ENCODE measurements at regions of chr2 and their contacts with region 1.

Region 1: GRCh38 chr2:97995734-97996624 is at the start of gene TMEM131:
- DNase-seq: peak; percentile 74
- ATAC-seq: peak; percentile 85
- H3K4me3 ChIP-seq: peak within 1 kb of the TSS; percentile 83
- H3K27ac ChIP-seq: peak within 1 kb of the TSS; percentile 94
- H3K4me1 ChIP-seq: peaks cover 9% of the 10 kb centered on the region
- H3K27me3 ChIP-seq: no peaks in the 10 kb centered on the region
- CTCF ChIP-seq: no peak
- EP300 ChIP-seq: peak in 1 of 2 experiments; percentile 5; a peak in 1 of 4 replicates
- POLR2A ChIP-seq: peak; percentile 88
- RAD21 ChIP-seq: no peak
- polyA plus RNA-seq, gene TMEM131: 6.0 to 8.1 TPM

Region 2: DNA sequence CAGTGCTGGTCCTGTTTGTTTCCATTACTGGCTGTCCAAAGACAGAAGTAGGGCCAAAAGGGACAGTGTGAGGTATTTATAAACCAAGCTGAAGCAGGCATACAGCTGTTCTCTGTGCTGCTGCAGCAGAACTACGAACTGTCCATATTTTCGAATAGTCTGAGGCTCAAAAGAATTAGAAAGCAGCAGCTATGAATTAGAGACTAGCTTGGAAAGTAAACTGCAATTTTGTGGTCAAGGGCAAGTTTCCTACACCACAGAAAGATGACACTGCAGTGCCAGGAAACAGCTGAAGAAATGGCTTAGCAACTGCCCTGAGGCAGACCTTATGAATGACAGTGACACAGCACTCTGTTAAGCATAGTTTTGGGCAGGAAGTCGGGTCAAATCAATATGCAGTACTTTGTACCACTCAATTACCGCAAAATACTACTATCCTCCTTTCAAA is 125.6 kb before region 1 on chr2:
- CTCF ChIA-PET with region 1: interaction called, 4 read pairs
- POLR2A ChIA-PET with region 1: interaction called, 9 read pairs
- RAD21 ChIA-PET with region 1: interaction called, 7 read pairs
- SMC1A ChIA-PET with region 1: interaction called, 12 read pairs
- in situ Hi-C with region 1: no loop called
- intact Hi-C with region 1: no loop called
- DNase-seq: peak; percentile 87
- ATAC-seq: peak; percentile 100
- H3K4me3 ChIP-seq: no peak overlapping the region
- H3K27ac ChIP-seq: peak overlapping the region; percentile 33; the same call in 1 of the 2 replicates
- H3K4me1 ChIP-seq: peaks cover 20% of the 10 kb centered on the region
- H3K27me3 ChIP-seq: no peaks in the 10 kb centered on the region
- CTCF ChIP-seq: peak in 2 of 3 experiments; percentile 13 to 66; a peak in 3 of 6 replicates
- EP300 ChIP-seq: peak in 1 of 2 experiments; percentile 41; a peak in 1 of 4 replicates
- POLR2A ChIP-seq: no peak
- RAD21 ChIP-seq: peak; percentile 64

Region 3: GRCh38 chr2:97935719-97936161 is 60.2 kb before region 1 on chr2:
- CTCF ChIA-PET with region 1: interaction called, 4 read pairs
- POLR2A ChIA-PET with region 1: interaction called, 6 read pairs
- RAD21 ChIA-PET with region 1: interaction called, 38 read pairs
- SMC1A ChIA-PET with region 1: interaction called, 28 read pairs
- in situ Hi-C with region 1: no loop called
- intact Hi-C with region 1: no loop called
- DNase-seq: no peak
- ATAC-seq: peak; percentile 25
- H3K4me3 ChIP-seq: peak overlapping the region; percentile 11; the same call in 1 of the 2 replicates
- H3K27ac ChIP-seq: peak overlapping the region; percentile 63
- H3K4me1 ChIP-seq: peaks cover 55% of the 10 kb centered on the region
- H3K27me3 ChIP-seq: no peaks in the 10 kb centered on the region
- CTCF ChIP-seq: no peak
- EP300 ChIP-seq: no peak
- POLR2A ChIP-seq: no peak
- RAD21 ChIP-seq: no peak

Region 4: DNA sequence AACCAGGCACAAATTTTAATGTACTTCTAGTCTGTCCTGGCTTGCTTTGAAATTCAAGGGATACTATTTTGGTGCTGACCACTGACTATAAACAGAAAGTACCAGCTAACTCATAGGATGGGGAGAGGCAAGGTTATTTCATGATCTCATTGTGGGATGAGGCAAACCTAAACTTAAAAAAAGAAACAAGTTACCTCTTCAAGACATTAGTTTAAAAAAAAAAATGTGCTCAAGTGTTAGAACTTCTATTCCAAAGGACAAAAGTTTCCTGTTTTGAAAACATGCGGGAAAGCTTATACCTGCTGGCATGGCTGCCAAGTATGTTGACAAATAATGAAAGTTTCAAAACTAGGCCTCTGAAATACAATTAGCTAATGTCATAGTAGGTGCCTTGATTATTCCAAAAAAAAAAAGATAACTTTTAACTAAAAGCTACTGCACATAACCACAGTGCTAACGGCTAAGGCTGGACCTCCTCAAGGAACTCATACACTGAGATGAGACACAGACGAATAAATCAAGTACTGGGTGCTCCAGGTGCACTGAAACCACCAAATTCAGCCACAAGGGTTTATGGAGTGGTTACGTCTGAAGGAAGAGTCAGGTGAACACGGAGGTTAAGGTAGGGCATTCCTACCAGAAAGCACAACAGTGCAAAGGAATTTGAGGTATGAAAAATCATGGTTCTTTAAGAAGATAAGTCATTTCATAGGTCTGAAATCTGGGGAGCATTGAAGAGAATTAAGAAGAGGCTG is 38.4 kb before region 1 on chr2:
- CTCF ChIA-PET with region 1: interaction called, 3 read pairs
- POLR2A ChIA-PET with region 1: interaction called, 3 read pairs
- RAD21 ChIA-PET with region 1: interaction called, 18 read pairs
- SMC1A ChIA-PET with region 1: interaction called, 28 read pairs
- in situ Hi-C with region 1: no loop called
- intact Hi-C with region 1: loop called (anchors 2 kb)
- DNase-seq: no peak
- ATAC-seq: peak; percentile 58
- H3K4me3 ChIP-seq: peak overlapping the region; percentile 39; the same call in 1 of the 2 replicates
- H3K27ac ChIP-seq: 0 out of 2 replicates have a peak overlapping the region, but pooled peaks have one; percentile 10
- H3K4me1 ChIP-seq: peaks cover 34% of the 10 kb centered on the region
- H3K27me3 ChIP-seq: no peaks in the 10 kb centered on the region
- CTCF ChIP-seq: no peak
- EP300 ChIP-seq: no peak
- POLR2A ChIP-seq: no peak
- RAD21 ChIP-seq: no peak

Region 5: GRCh38 chr2:98012561-98012991 is 16.6 kb after region 1 on chr2:
- CTCF ChIA-PET with region 1: interaction called, 5 read pairs
- POLR2A ChIA-PET with region 1: interaction called, 4 read pairs
- RAD21 ChIA-PET with region 1: interaction called, 10 read pairs
- SMC1A ChIA-PET with region 1: interaction called, 9 read pairs
- in situ Hi-C with region 1: no loop called
- intact Hi-C with region 1: loop called (anchors 2 kb)
- DNase-seq: peak; percentile 88
- ATAC-seq: peak; percentile 83
- H3K4me3 ChIP-seq: peak overlapping the region; percentile 46
- H3K27ac ChIP-seq: peak overlapping the region; percentile 97
- H3K4me1 ChIP-seq: peaks cover 55% of the 10 kb centered on the region
- H3K27me3 ChIP-seq: no peaks in the 10 kb centered on the region
- CTCF ChIP-seq: no peak
- EP300 ChIP-seq: peak; percentile 85 to 99; a peak in 3 of 4 replicates
- POLR2A ChIP-seq: peak; percentile 59; the same call in 1 of the 2 replicates
- RAD21 ChIP-seq: 0 out of 2 replicates have a peak, but pooled peaks have one; percentile 24

Region 6: DNA sequence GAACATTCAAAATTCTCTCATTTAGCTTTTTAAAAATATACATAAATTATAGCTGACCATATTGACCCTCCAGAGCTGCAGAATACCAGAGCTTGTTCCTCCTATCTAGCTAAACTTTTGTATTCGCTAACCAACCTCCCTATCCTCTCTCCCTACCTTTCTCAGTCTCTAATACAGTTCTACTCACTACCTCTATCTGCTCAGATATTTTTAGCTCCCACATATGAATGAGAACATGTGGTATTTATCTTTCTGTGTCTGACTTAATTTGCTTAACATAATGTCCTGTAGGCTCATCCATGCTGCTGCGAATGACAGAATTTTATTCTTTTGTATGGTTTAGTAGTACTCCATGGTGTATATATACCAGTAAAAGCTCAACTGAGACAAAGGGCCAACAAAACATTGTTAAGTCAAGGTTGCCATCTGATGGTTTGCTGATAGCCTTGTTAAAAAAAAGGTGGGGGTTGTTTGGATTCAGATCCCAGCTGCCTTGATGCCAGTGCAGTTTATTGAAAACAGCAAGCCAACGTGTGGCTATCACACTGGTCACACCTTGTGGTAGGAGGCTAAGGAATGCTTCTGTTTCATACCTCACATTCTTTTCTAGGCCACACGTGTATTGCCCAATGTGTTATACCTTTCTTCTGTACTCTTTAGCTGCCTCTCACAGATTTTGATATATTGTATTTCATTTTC is 192.5 kb after region 1 on chr2:
- CTCF ChIA-PET with region 1: no interaction called
- POLR2A ChIA-PET with region 1: no interaction called
- RAD21 ChIA-PET with region 1: no interaction called
- SMC1A ChIA-PET with region 1: no interaction called
- in situ Hi-C with region 1: no loop called
- intact Hi-C with region 1: loop called (anchors 5 kb)
- DNase-seq: no peak
- ATAC-seq: no peak
- H3K4me3 ChIP-seq: no peak overlapping the region
- H3K27ac ChIP-seq: no peak overlapping the region
- H3K4me1 ChIP-seq: no peaks in the 10 kb centered on the region; the same call in 1 of the 2 replicates
- H3K27me3 ChIP-seq: no peaks in the 10 kb centered on the region; a peak in 1 of 4 replicates
- CTCF ChIP-seq: peak in 2 of 3 experiments; percentile 21 to 34; a peak in 3 of 6 replicates
- EP300 ChIP-seq: no peak
- POLR2A ChIP-seq: no peak
- RAD21 ChIP-seq: peak; percentile 51

Measured in GM12878 (cell line).